CD8-positive, alpha-beta T cell (primary cell): ENCODE measurements at regions of chr20 and their contacts with region 1.

Region 1: GRCh38 chr20:17968366-17969279 is at the starts of genes MGME1 and SNX5:
- DNase-seq: peak; percentile 97 to 99 (median 98)
- ATAC-seq: peak; percentile 89
- H3K4me3 ChIP-seq: peak within 1 kb of the TSS; percentile 91 to 99
- H3K4me3 Mint-ChIP-seq: peak within 1 kb of the TSS; percentile 97
- H3K27ac ChIP-seq: peak within 1 kb of the TSS; percentile 91 to 99
- H3K27ac Mint-ChIP-seq: peak within 1 kb of the TSS; percentile 98
- H3K4me1 ChIP-seq: peaks cover 63% of the 10 kb centered on the region
- H3K4me1 Mint-ChIP-seq: peaks cover 78% of the 10 kb centered on the region
- H3K27me3 ChIP-seq: no peaks in the 10 kb centered on the region
- H3K27me3 Mint-ChIP-seq: no peaks in the 10 kb centered on the region
- CTCF ChIP-seq: no peak
- total RNA-seq, gene MGME1: 4.5 to 4.7 TPM
- total RNA-seq, gene SNX5: 47.3 to 52.0 TPM

Region 2: DNA sequence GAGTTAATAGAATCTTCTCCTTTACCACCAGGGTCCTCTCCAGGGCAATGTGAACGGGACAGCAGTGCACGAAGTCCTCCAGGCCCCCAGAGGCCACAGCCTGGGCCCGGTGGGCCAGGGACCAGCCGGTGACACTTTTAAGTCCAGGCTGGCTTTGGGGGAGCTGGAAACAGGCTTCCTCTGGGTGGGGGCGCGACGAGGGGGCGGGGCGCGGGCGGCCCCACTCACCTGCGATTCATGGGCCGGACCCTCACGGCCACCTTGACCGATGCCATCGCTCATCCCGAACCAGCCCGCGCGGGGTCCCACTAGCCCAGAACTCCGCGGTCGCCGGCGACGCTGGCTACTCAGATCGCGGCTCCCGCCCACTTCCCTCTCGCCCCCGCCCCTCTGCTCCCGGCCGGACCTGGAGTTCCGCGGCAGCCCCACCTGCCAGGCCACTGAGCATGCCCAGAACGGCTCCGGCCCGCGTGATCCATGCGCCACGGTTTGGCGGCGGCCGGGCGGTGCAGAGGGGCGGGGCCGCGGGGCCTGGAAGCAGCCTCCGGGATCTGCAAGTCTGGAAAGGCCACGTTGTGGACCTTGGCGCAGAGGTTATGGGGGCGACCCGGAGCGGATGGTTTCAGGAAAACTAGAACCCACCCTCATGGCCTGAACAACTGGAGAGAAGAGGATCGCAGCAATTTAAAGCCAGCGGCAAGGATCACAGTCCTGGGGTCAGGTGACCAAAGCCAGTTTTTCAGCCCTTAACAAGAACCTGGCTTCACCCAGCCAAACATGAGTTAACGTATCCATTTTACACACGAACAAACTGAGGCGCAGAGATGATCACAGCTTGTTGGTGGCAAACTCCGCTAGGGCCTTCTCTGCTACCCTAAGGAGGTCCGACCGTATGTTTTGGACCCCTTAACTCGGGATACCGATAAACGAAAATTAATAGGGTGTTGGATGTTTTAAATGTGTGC is 1395.3 kb before region 1 on chr20 and contains the start of gene KIF16B:
- CTCF ChIA-PET with region 1: no interaction called
- POLR2A ChIA-PET with region 1: no interaction called
- intact Hi-C with region 1: loop called in 1 of 2 experiments (anchors 5 kb)
- DNase-seq: peak; percentile 35 to 88 (median 79)
- ATAC-seq: peak; percentile 79
- H3K4me3 ChIP-seq: peak within 1 kb of the TSS; percentile 60 to 88
- H3K4me3 Mint-ChIP-seq: peak within 1 kb of the TSS; percentile 88
- H3K27ac ChIP-seq: peak within 1 kb of the TSS; percentile 26 to 33
- H3K27ac Mint-ChIP-seq: peak within 1 kb of the TSS; percentile 53
- H3K4me1 ChIP-seq: peaks cover 19% of the 10 kb centered on the region
- H3K4me1 Mint-ChIP-seq: peaks cover 43% of the 10 kb centered on the region
- H3K27me3 ChIP-seq: no peaks in the 10 kb centered on the region
- H3K27me3 Mint-ChIP-seq: peaks cover 4% of the 10 kb centered on the region
- CTCF ChIP-seq: no peak
- total RNA-seq, gene KIF16B: 4.7 to 4.9 TPM

Region 3: GRCh38 chr20:17504898-17505635 is 463.6 kb before region 1 on chr20:
- CTCF ChIA-PET with region 1: interaction called, 6 read pairs
- POLR2A ChIA-PET with region 1: no interaction called
- intact Hi-C with region 1: loop called in 1 of 2 experiments (anchors 1 kb)
- DNase-seq: peak; percentile 13 to 84 (median 48)
- ATAC-seq: peak; percentile 72
- H3K4me3 ChIP-seq: peak overlapping the region; percentile 56 to 61
- H3K4me3 Mint-ChIP-seq: peak overlapping the region; percentile 89
- H3K27ac ChIP-seq: peak overlapping the region in 1 of 2 experiments; percentile 64
- H3K27ac Mint-ChIP-seq: peak overlapping the region; percentile 89
- H3K4me1 ChIP-seq: peaks cover 24% of the 10 kb centered on the region
- H3K4me1 Mint-ChIP-seq: peaks cover 36% of the 10 kb centered on the region
- H3K27me3 ChIP-seq: no peaks in the 10 kb centered on the region
- H3K27me3 Mint-ChIP-seq: no peaks in the 10 kb centered on the region
- CTCF ChIP-seq: peak; percentile 84

Region 4: GRCh38 chr20:17938871-17939619 is 29.6 kb before region 1 on chr20:
- CTCF ChIA-PET with region 1: interaction called, 17 read pairs
- POLR2A ChIA-PET with region 1: interaction called, 5 read pairs
- intact Hi-C with region 1: loop called in 1 of 2 experiments (anchors 2 kb)
- DNase-seq: peak; percentile 17 to 81 (median 57)
- ATAC-seq: peak; percentile 95
- H3K4me3 ChIP-seq: no peak overlapping the region
- H3K4me3 Mint-ChIP-seq: peak overlapping the region; percentile 50
- H3K27ac ChIP-seq: no peak overlapping the region
- H3K27ac Mint-ChIP-seq: peak overlapping the region; percentile 71
- H3K4me1 ChIP-seq: peaks cover 12% of the 10 kb centered on the region
- H3K4me1 Mint-ChIP-seq: peaks cover 16% of the 10 kb centered on the region
- H3K27me3 ChIP-seq: no peaks in the 10 kb centered on the region
- H3K27me3 Mint-ChIP-seq: no peaks in the 10 kb centered on the region
- CTCF ChIP-seq: peak; percentile 87

Region 5: GRCh38 chr20:17995967-17996819 is 27.6 kb after region 1 on chr20:
- CTCF ChIA-PET with region 1: interaction called, 13 read pairs
- POLR2A ChIA-PET with region 1: no interaction called
- intact Hi-C with region 1: loop called (anchors 1 kb)
- DNase-seq: peak in 6 of 9 experiments; percentile 11 to 78 (median 38)
- ATAC-seq: peak; percentile 97
- H3K4me3 ChIP-seq: no peak overlapping the region
- H3K4me3 Mint-ChIP-seq: no peak overlapping the region
- H3K27ac ChIP-seq: no peak overlapping the region
- H3K27ac Mint-ChIP-seq: no peak overlapping the region
- H3K4me1 ChIP-seq: no peaks in the 10 kb centered on the region
- H3K4me1 Mint-ChIP-seq: peaks cover 9% of the 10 kb centered on the region
- H3K27me3 ChIP-seq: no peaks in the 10 kb centered on the region
- H3K27me3 Mint-ChIP-seq: peaks cover 19% of the 10 kb centered on the region
- CTCF ChIP-seq: peak; percentile 97

Region 6: GRCh38 chr20:18466894-18467730 is 498.5 kb after region 1 on chr20 and contains the starts of genes DZANK1 and POLR3F:
- CTCF ChIA-PET with region 1: no interaction called
- POLR2A ChIA-PET with region 1: no interaction called
- intact Hi-C with region 1: loop called in 1 of 2 experiments (anchors 1 kb)
- DNase-seq: peak; percentile 84 to 95 (median 93)
- ATAC-seq: peak; percentile 90
- H3K4me3 ChIP-seq: peak within 1 kb of the TSS; percentile 79 to 93
- H3K4me3 Mint-ChIP-seq: peak within 1 kb of the TSS; percentile 97
- H3K27ac ChIP-seq: peak within 1 kb of the TSS; percentile 73 to 92
- H3K27ac Mint-ChIP-seq: peak within 1 kb of the TSS; percentile 97
- H3K4me1 ChIP-seq: peaks cover 16% of the 10 kb centered on the region
- H3K4me1 Mint-ChIP-seq: peaks cover 24% of the 10 kb centered on the region
- H3K27me3 ChIP-seq: no peaks in the 10 kb centered on the region
- H3K27me3 Mint-ChIP-seq: no peaks in the 10 kb centered on the region
- CTCF ChIP-seq: no peak
- total RNA-seq, gene DZANK1: 2.0 to 2.3 TPM
- total RNA-seq, gene POLR3F: 11.5 TPM

Region 7: DNA sequence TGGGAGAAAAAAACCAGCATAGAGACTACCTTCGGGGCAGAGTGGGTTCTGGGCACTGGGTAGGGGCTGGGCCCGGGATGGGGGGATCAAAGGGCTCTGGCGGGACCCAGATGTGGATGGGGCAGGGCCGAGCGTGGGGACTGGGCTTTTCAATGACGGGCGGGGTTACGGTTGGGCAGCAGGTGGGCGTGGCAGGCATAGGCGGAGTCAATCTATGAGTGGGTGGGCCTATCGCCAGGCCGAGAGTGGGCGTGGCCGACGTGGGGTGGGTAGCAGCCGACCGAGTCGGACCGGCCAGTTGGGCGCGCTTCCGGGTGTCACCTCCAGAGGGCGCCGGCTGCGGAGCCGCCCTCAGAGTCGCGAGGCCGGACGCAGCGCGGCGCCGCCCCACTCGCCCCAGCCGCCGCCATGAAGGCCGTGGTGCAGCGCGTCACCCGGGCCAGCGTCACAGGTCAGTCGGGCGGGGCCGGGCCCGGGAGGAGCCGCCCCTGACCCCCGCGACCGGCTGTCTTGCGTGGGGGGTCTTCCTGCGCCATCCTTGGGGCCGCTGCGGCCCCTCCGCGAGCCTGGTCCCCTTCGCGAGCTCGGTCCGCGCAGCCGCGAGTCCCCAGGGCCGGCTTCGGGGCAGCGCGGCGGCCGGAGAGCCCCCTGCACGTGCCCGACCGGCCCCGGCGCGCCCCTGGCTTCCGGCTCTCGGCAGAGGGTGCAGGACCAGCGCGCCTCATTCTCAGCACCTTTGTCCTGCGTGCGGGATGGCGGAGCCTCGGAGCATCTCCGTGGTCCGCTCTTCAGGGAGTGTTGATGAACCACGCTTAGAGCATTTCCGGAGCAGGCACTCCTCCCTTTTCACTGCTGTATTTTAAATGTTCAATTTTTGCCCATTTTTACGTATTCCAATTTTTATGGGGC is 619.3 kb after region 1 on chr20 and contains the start of gene DTD1:
- CTCF ChIA-PET with region 1: no interaction called
- POLR2A ChIA-PET with region 1: no interaction called
- intact Hi-C with region 1: loop called in 1 of 2 experiments (anchors 5 kb)
- DNase-seq: peak; percentile 53 to 89 (median 82)
- ATAC-seq: peak; percentile 82
- H3K4me3 ChIP-seq: peak within 1 kb of the TSS; percentile 65 to 83
- H3K4me3 Mint-ChIP-seq: peak within 1 kb of the TSS; percentile 95
- H3K27ac ChIP-seq: peak within 1 kb of the TSS; percentile 56 to 83
- H3K27ac Mint-ChIP-seq: peak within 1 kb of the TSS; percentile 94
- H3K4me1 ChIP-seq: peaks cover 18% of the 10 kb centered on the region
- H3K4me1 Mint-ChIP-seq: peaks cover 32% of the 10 kb centered on the region
- H3K27me3 ChIP-seq: no peaks in the 10 kb centered on the region
- H3K27me3 Mint-ChIP-seq: peaks cover 6% of the 10 kb centered on the region
- CTCF ChIP-seq: peak; percentile 45
- total RNA-seq, gene DTD1: 12.5 to 14.5 TPM